ENCODE measurements at regions of chr12 and their contacts with region 1.

Region 1: GRCh38 chr12:130871286-130872178 is at the start of gene RAN:
- DNase-seq: peak; percentile 88
- H3K4me3 Mint-ChIP-seq: peak within 1 kb of the TSS; percentile 98
- H3K27ac Mint-ChIP-seq: peak within 1 kb of the TSS; percentile 98
- H3K4me1 Mint-ChIP-seq: peaks cover 47% of the 10 kb centered on the region
- H3K27me3 Mint-ChIP-seq: no peaks in the 10 kb centered on the region
- total RNA-seq, gene RAN: 1,905 and 1,953 TPM in 2 replicates

Region 2: GRCh38 chr12:129428240-129428936 is 1443.1 kb before region 1 on chr12:
- intact Hi-C with region 1: no loop called
- DNase-seq: no peak
- H3K4me3 Mint-ChIP-seq: no peak overlapping the region
- H3K27ac Mint-ChIP-seq: no peak overlapping the region
- H3K4me1 Mint-ChIP-seq: no peaks in the 10 kb centered on the region
- H3K27me3 Mint-ChIP-seq: no peaks in the 10 kb centered on the region

Region 3: GRCh38 chr12:130438711-130439110 is 432.8 kb before region 1 on chr12:
- intact Hi-C with region 1: no loop called
- DNase-seq: no peak
- H3K4me3 Mint-ChIP-seq: no peak overlapping the region
- H3K27ac Mint-ChIP-seq: no peak overlapping the region
- H3K4me1 Mint-ChIP-seq: no peaks in the 10 kb centered on the region
- H3K27me3 Mint-ChIP-seq: no peaks in the 10 kb centered on the region

Region 4: GRCh38 chr12:130813436-130813835 is 58.1 kb before region 1 on chr12:
- intact Hi-C with region 1: no loop called
- DNase-seq: no peak
- H3K4me3 Mint-ChIP-seq: no peak overlapping the region
- H3K27ac Mint-ChIP-seq: no peak overlapping the region
- H3K4me1 Mint-ChIP-seq: peaks cover 2% of the 10 kb centered on the region
- H3K27me3 Mint-ChIP-seq: no peaks in the 10 kb centered on the region

Region 5: DNA sequence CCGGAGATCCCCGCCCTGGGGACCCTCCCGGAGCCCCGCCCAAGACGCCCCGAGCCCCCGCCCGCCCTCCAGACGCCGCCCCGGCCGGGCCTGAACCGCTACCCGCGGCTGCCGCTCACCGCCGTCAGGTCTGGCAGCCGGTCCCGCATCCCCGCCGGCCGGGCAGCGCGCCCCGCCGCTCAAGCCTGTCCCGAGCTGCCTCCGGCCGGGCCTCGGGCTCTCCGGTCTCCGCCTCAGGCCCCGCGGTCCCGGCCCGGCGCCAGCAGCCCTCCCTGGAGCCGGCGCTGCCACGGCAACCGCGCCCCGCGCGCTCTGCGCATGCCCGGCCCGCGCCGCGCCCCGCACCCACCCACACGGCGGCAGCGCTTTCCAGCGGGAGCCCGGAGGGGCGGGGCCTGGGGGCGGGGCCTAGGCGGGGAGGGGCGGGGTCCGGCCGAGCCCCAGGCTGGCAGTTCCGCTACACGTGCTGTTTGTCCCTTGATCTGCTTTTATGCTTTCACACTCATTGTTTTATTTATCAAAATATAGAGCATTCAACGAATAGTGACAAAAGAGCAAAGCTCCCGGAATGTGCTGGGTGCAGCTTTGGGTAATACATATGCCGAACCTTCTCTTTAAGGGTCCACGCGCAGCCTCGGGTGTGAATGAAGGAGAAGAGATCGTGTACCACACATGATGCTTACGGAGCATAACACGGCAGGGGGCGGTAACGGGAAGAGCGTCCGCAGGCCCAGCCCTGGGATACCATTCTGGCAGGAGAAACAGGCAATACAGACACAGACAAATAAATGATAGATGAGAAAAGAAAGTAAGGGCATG is 32.4 kb before region 1 on chr12 and contains the start of gene STX2:
- intact Hi-C with region 1: loop called (anchors 1 kb)
- DNase-seq: peak; percentile 84
- H3K4me3 Mint-ChIP-seq: peak within 1 kb of the TSS; percentile 82
- H3K27ac Mint-ChIP-seq: peak within 1 kb of the TSS; percentile 86
- H3K4me1 Mint-ChIP-seq: peaks cover 24% of the 10 kb centered on the region
- H3K27me3 Mint-ChIP-seq: no peaks in the 10 kb centered on the region
- total RNA-seq, gene STX2: 19.6 and 19.9 TPM in 2 replicates

Region 6: GRCh38 chr12:130849561-130850417 is 21.7 kb before region 1 on chr12:
- intact Hi-C with region 1: no loop called
- DNase-seq: no peak
- H3K4me3 Mint-ChIP-seq: no peak overlapping the region
- H3K27ac Mint-ChIP-seq: no peak overlapping the region
- H3K4me1 Mint-ChIP-seq: no peaks in the 10 kb centered on the region
- H3K27me3 Mint-ChIP-seq: peaks cover 6% of the 10 kb centered on the region

Region 7: GRCh38 chr12:131092901-131093603 is 221.5 kb after region 1 on chr12:
- intact Hi-C with region 1: loop called (anchors 5 kb)
- DNase-seq: peak; percentile 27
- H3K4me3 Mint-ChIP-seq: peak overlapping the region; percentile 49
- H3K27ac Mint-ChIP-seq: peak overlapping the region; percentile 50
- H3K4me1 Mint-ChIP-seq: peaks cover 24% of the 10 kb centered on the region
- H3K27me3 Mint-ChIP-seq: no peaks in the 10 kb centered on the region